Adrenal gland (tissue), 19 donors: ENCODE measurements at regions of chr17 and their contacts with region 1.

Region 1: GRCh38 chr17:57995076-57995956 is 7.3 kb upstream of the VEZF1 start:
- DNase-seq: peak; percentile 51 to 89 (median 81)
- H3K4me3 ChIP-seq: no peak overlapping the region
- H3K27ac ChIP-seq: peak overlapping the region in 2 of 5 donors; percentile 2 to 62
- H3K4me1 ChIP-seq: peaks cover 0 to 16% of the 10 kb centered on the region in 2 donors
- H3K27me3 ChIP-seq: no peaks in the 10 kb centered on the region
- CTCF ChIP-seq: peak; percentile 49 to 82 (median 77)
- POLR2A ChIP-seq: no peak

Region 2: DNA sequence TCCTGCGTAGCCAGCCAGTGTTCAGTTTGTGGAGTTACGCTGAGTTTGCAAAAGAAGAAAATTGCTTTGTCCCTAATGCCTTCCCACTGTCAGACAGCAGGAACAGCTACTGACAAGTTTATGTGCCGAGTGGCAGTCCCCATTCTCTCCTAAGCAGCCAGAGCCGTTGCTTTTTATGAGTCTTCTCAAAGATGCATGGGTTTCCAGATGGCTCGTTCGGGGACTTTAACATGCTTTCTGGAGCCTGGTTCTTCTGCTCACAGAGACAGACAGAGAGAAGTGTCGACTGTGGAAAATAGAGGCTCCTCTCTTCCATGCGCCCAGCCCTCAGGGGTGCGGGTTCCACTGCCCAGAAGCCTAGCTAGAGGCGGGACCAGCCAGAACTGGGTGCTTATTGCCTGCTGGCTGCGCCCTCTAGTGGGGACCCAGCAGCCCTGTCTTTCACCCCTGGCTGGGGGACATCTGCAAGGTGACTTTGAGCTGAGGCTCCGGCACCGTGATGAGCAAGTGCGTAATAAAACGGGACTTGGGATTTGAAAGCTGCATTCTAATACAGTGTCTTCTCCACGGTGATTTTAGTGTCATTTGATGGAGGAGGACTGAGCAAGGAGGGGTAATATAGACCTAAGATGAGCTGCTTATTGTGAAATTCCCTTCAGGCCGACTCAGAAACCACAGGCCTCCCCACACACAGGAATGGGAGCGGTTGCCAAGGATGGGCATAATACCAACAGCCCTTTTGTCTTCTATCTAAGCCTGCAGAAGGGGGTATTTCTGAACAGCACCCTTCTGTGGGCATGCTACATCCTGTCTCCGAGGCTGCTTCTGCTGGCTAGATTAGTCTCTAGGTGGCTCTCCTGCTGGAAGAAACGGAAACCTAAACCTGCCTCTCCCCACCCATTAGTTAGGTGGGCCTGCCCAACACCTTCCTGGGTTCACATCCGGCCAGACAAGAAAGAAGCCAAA is 323.4 kb before region 1 on chr17:
- intact Hi-C with region 1: no loop called
- DNase-seq: peak; percentile 78 to 91 (median 84)
- H3K4me3 ChIP-seq: no peak overlapping the region
- H3K27ac ChIP-seq: peak overlapping the region in 2 of 5 donors; percentile 36 to 60
- H3K4me1 ChIP-seq: peaks cover 8 to 17% of the 10 kb centered on the region in 2 donors
- H3K27me3 ChIP-seq: no peaks in the 10 kb centered on the region
- CTCF ChIP-seq: peak; percentile 84 to 96 (median 94)
- POLR2A ChIP-seq: no peak

Region 3: GRCh38 chr17:57855391-57856035 is 139.8 kb before region 1 on chr17:
- intact Hi-C with region 1: loop called (anchors 5 kb)
- DNase-seq: no peak
- H3K4me3 ChIP-seq: no peak overlapping the region
- H3K27ac ChIP-seq: no peak overlapping the region
- H3K4me1 ChIP-seq: peaks cover 22 to 50% of the 10 kb centered on the region in 2 donors
- H3K27me3 ChIP-seq: no peaks in the 10 kb centered on the region
- CTCF ChIP-seq: no peak
- POLR2A ChIP-seq: no peak

Region 4: DNA sequence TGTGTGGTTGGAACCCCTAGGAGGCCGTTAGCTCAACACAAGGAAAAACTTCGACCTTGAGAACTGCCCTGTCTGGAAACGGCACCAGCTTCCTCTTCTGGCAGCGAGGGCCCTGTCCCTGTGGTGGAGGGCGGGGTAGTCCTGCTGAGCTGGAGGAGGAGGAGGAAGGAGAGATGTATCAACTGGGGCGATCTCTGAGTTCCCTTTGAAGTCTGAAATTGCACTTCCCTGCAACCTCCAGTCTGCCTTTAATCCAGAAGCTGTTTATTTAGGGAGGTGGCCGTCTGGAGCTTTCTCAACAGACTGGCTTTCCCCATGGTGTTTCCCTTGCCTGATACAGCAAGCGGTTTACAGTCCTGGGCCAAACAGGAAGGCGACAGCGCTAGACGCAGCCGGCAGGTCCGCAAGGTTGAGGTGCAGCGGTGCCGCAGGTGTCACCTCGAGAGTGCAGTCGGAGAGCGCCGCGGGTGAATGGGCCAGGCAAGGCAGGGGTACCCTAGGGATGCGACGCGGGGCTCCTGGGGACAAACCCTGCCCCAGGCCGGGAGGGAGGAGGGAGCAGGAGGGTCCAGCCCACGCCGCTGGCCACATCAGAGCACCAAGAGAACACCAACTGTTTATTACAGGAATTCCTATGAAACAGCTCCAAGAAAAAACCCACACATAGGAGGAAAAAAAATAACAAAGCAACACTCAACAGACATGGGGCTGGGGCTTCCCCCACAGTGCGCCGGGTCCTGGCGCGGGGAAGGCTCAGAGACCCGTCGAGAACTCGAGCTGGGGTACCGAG is 134.1 kb before region 1 on chr17:
- intact Hi-C with region 1: loop called (anchors 5 kb)
- DNase-seq: peak; percentile 66 to 94 (median 91)
- H3K4me3 ChIP-seq: peak overlapping the region in 2 of 4 donors; percentile 28 to 60
- H3K27ac ChIP-seq: peak overlapping the region; percentile 84 to 95 (median 94)
- H3K4me1 ChIP-seq: peaks cover 22 to 32% of the 10 kb centered on the region in 2 donors
- H3K27me3 ChIP-seq: no peaks in the 10 kb centered on the region
- CTCF ChIP-seq: no peak
- POLR2A ChIP-seq: peak in 1 of 2 donors; percentile 76